ENCODE measurements at regions of chr3 and their contacts with region 1.

Region 1: DNA sequence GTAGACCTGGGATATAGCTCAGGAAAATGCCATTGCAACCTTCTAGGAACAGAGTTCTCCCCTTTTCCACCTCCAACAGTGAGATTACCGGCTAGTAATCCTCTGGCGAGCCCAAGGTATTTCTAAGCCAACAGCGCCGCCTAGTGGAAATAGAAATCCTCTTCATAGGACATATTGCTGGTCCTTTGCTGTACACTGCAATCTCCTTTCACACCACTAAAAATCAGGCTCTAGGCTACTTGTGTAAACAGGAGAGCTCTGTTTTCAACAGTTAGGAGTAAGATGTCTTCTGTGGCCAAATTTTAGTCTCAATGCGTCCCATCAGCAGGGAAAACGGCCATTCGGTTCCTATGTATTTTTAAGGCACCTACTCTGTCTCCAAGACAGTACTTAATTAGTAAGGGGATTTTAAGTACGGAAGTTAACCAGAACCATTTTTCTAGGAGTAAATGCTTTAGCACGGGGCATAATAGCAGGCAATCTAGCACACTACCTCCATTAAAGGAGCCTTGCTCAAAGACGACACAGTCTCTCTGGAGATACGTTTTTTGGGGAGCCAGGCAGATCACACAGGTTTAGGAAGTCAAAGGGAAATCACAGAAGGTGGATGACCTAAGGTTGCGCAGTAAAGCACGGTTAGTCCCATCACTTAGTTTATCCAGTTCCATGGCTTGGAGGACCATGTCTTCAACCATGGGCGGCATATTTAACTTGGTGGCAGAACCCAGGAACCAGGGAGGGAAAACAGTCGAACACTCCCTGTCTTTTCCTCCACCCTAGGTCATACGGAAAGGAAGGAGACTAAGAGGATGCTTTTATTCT is 43.8 kb downstream of the NCEH1 start:
- DNase-seq: peak; percentile 95
- ATAC-seq: peak; percentile 100
- H3K4me3 ChIP-seq: no peak overlapping the region
- H3K27ac ChIP-seq: no peak overlapping the region
- H3K4me1 ChIP-seq: no peaks in the 10 kb centered on the region
- H3K27me3 ChIP-seq: no peaks in the 10 kb centered on the region
- CTCF ChIP-seq: peak; percentile 93

Region 2: GRCh38 chr3:172332256-172333041 is 334.6 kb before region 1 on chr3:
- CTCF ChIA-PET with region 1: no interaction called
- POLR2A ChIA-PET with region 1: no interaction called
- intact Hi-C with region 1: loop called (anchors 2 kb)
- DNase-seq: peak; percentile 75
- ATAC-seq: peak; percentile 94
- H3K4me3 ChIP-seq: no peak overlapping the region
- H3K27ac ChIP-seq: no peak overlapping the region
- H3K4me1 ChIP-seq: no peaks in the 10 kb centered on the region
- H3K27me3 ChIP-seq: no peaks in the 10 kb centered on the region
- CTCF ChIP-seq: peak; percentile 93

Region 3: DNA sequence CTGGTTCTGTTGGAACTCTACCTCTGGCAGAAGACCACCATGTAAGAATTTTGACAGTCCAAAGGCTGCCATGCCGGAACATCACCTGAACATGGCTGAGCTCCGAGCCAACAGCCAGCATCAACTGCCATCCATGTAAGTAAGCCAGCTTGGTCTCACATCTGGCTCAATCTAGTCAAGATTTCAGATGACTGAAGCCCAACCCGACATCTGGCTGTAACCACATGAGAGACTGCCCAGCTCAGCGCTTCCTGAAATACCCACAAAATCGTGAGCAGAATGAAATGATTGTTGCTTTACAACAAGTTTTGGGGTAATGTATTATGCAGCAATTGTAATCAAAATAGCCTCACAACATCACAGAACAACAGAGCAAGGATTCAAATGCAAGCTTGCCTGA is 251.8 kb before region 1 on chr3:
- CTCF ChIA-PET with region 1: no interaction called
- POLR2A ChIA-PET with region 1: no interaction called
- intact Hi-C with region 1: no loop called
- DNase-seq: no peak
- ATAC-seq: no peak
- H3K4me3 ChIP-seq: no peak overlapping the region
- H3K27ac ChIP-seq: no peak overlapping the region
- H3K4me1 ChIP-seq: no peaks in the 10 kb centered on the region
- H3K27me3 ChIP-seq: no peaks in the 10 kb centered on the region
- CTCF ChIP-seq: no peak

Region 4: DNA sequence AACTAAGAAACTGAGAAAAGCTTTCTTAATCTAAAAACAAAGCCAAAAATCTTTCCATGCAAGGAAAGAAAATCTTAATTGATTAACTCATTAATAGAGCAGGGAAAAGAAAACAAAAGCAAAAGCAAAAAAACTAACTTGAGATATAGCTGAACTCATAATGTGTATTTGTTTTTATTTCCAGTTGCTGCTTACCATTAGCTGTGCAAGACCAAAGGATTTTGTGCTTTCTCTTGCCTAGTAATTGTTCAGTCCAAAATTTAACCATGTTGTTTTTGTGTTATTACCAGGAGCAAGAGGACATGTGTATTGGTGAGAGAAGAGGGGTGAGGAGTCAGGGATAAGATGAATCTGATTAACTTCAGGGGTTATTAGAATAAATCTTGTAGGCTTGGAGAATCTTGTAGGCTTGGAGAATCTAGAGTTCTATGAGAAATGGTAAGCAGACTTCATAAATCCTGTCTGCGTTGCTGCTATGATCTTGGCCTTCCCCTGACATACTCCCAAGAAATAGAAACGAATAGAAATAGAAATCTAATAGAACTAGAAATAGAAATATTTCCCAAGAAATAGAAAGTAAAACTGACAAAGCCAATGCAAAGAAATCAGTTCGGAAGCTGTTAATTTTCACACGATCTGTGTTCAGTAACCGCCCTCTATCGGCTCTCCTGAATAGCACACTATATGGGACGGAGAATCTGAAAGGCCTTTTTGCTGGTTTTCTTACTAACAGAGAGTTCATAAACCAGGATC is 71.3 kb before region 1 on chr3:
- CTCF ChIA-PET with region 1: no interaction called
- POLR2A ChIA-PET with region 1: interaction called, 6 read pairs
- intact Hi-C with region 1: loop called (anchors 1 kb)
- DNase-seq: peak; percentile 77
- ATAC-seq: peak; percentile 93
- H3K4me3 ChIP-seq: peak overlapping the region; percentile 55
- H3K27ac ChIP-seq: no peak overlapping the region
- H3K4me1 ChIP-seq: no peaks in the 10 kb centered on the region
- H3K27me3 ChIP-seq: no peaks in the 10 kb centered on the region
- CTCF ChIP-seq: peak; percentile 95

Region 5: DNA sequence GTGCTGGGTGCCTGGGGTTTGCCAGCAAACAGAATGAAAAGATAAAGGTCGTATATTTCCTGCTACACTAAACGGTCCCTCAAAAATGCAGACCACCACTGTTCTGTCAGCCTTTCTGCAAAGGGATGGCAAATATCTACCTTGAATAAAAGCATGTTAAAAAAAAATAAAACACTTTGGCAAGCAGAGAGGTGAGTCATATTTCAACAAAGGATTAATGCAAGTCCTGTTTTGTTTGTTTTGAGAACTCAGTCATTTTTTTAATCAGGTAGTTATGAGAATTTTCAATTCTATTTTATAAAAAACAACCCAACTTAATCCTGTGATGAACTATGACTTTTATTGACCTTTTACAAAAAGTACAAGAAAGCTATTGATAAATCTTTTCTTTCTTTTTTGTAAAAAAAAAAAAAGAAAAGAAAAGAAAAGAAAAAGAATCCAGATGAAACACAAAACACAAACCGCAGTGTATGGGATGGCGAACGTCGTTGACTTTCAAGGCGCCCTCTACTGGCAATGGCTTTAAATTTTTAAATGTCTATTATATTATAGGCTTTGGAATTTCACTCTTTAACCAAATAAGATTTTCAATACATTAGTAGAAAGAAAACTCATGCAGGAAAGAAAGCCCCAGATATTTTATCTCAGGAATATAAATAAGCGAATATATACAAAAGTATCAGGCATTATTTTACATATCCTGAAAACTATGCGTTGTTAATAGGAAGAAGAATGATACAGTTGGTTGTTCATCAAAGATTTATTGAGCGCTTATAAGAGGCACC is 44.0 kb before region 1 on chr3:
- CTCF ChIA-PET with region 1: interaction called, 6 read pairs
- POLR2A ChIA-PET with region 1: no interaction called
- intact Hi-C with region 1: loop called (anchors 1 kb)
- DNase-seq: peak; percentile 78
- ATAC-seq: peak; percentile 73
- H3K4me3 ChIP-seq: peak overlapping the region; percentile 70
- H3K27ac ChIP-seq: peak overlapping the region; percentile 83
- H3K4me1 ChIP-seq: peaks cover 32% of the 10 kb centered on the region
- H3K27me3 ChIP-seq: no peaks in the 10 kb centered on the region
- CTCF ChIP-seq: peak; percentile 76

Region 6: GRCh38 chr3:172710664-172711453 is 43.8 kb after region 1 on chr3 and contains the start of gene NCEH1:
- CTCF ChIA-PET with region 1: no interaction called
- POLR2A ChIA-PET with region 1: interaction called, 12 read pairs
- intact Hi-C with region 1: no loop called
- DNase-seq: peak; percentile 99
- ATAC-seq: peak; percentile 90
- H3K4me3 ChIP-seq: peak within 1 kb of the TSS; percentile 93
- H3K27ac ChIP-seq: peak within 1 kb of the TSS; percentile 91
- H3K4me1 ChIP-seq: peaks cover 33% of the 10 kb centered on the region
- H3K27me3 ChIP-seq: no peaks in the 10 kb centered on the region
- CTCF ChIP-seq: peak; percentile 88
- total RNA-seq, gene NCEH1: 28.2 and 33.9 TPM in 2 replicates

Region 7: DNA sequence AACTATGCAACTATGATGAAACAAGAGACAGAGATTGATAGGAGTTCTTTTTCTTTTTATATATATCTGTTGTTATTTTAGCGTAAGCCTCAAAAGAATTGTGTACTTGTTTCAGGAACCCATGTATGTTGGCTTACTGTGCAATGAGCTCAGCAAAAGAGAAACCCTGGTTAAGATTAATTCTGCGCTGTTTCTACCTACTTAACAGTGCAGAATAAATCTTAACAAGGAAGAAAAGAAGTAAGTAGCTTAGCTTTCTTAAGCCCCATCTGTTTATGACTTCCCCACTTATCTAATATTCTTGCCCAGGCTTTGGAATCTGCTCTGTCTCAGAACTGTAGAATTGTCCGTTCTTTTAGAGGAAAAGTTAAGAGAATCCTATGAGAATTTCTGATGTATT is 110.8 kb after region 1 on chr3:
- CTCF ChIA-PET with region 1: no interaction called
- POLR2A ChIA-PET with region 1: interaction called, 19 read pairs
- intact Hi-C with region 1: no loop called
- DNase-seq: no peak
- ATAC-seq: no peak
- H3K4me3 ChIP-seq: no peak overlapping the region
- H3K27ac ChIP-seq: no peak overlapping the region
- H3K4me1 ChIP-seq: no peaks in the 10 kb centered on the region
- H3K27me3 ChIP-seq: no peaks in the 10 kb centered on the region
- CTCF ChIP-seq: no peak